Dorsolateral prefrontal cortex (tissue), 120 donors: ENCODE measurements at regions of chr4 and their contacts with region 1.

Region 1: GRCh38 chr4:15655229-15656037 is at the start of gene FBXL5:
- DNase-seq: peak; percentile 60 to 84 (median 68)
- H3K4me3 ChIP-seq: peak within 1 kb of the TSS; percentile 64 to 90 (median 80)
- H3K27ac ChIP-seq: peak within 1 kb of the TSS; percentile 98 to 100 (median 100)
- H3K27me3 ChIP-seq: no peaks in the 10 kb centered on the region
- CTCF ChIP-seq: peak in 7 of 56 donors; percentile 3 to 34 (median 11)
- total RNA-seq, gene FBXL5: 72.7 to 124 (median 93.8) TPM

Region 2: DNA sequence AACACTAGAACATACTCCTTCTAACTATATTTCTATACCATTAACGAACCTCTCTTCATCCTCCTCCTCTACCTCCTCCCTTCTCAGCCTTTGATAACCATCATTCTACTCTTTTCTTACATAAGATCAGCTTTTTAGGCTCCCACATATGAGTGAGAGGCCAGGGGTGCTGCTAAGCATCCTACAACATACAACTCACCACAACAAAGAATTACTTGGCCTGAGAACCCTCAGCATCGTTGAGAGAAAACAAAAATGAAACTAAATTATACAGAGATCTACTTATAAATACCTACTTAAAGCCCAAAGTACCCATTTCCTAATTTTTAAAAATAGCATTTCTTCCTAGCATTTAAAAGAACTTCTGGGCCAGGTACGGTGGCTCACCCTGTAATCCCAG is 108.0 kb before region 1 on chr4:
- intact Hi-C with region 1: no loop called
- DNase-seq: no peak
- H3K4me3 ChIP-seq: no peak overlapping the region
- H3K27ac ChIP-seq: no peak overlapping the region
- H3K27me3 ChIP-seq: no peaks in the 10 kb centered on the region
- CTCF ChIP-seq: no peak

Region 3: GRCh38 chr4:15681207-15682015 is 26.0 kb after region 1 on chr4 and contains the start of gene FAM200B:
- intact Hi-C with region 1: loop called (anchors 1 kb)
- DNase-seq: peak; percentile 97 to 99 (median 99)
- H3K4me3 ChIP-seq: peak within 1 kb of the TSS; percentile 46 to 98 (median 86)
- H3K27ac ChIP-seq: peak within 1 kb of the TSS; percentile 60 to 99 (median 95)
- H3K27me3 ChIP-seq: peaks cover 0 to 4% (median 0%) of the 10 kb centered on the region in 45 donors
- CTCF ChIP-seq: peak in 47 of 56 donors; percentile 10 to 65 (median 42)
- total RNA-seq, gene FAM200B: 44.8 to 87.8 (median 59.0) TPM

Region 4: GRCh38 chr4:15805583-15806517 is 150.4 kb after region 1 on chr4:
- intact Hi-C with region 1: loop called in 1 of 2 experiments (anchors 10 kb)
- DNase-seq: peak in 2 of 10 donors; percentile 7 to 29
- H3K4me3 ChIP-seq: no peak overlapping the region
- H3K27ac ChIP-seq: no peak overlapping the region
- H3K27me3 ChIP-seq: no peaks in the 10 kb centered on the region
- CTCF ChIP-seq: peak; percentile 35 to 78 (median 66)

Region 5: GRCh38 chr4:16225863-16226815 is 570.7 kb after region 1 on chr4 and contains the start of gene TAPT1:
- intact Hi-C with region 1: loop called in 1 of 2 experiments (anchors 10 kb)
- DNase-seq: peak; percentile 57 to 86 (median 74)
- H3K4me3 ChIP-seq: peak within 1 kb of the TSS; percentile 38 to 93 (median 84)
- H3K27ac ChIP-seq: peak within 1 kb of the TSS; percentile 79 to 100 (median 96)
- H3K27me3 ChIP-seq: no peaks in the 10 kb centered on the region
- CTCF ChIP-seq: no peak
- total RNA-seq, gene TAPT1: 59.3 to 107 (median 81.7) TPM